ENCODE measurements at regions of chr12 and their contacts with region 1.

Region 1: GRCh38 chr12:123043536-123044001 is 63.1 kb downstream of the ARL6IP4 start:
- DNase-seq: peak; percentile 78 to 92 (median 84)
- H3K4me3 ChIP-seq: no peak overlapping the region
- H3K27ac ChIP-seq: peak overlapping the region; percentile 20 to 36
- H3K4me1 ChIP-seq: peaks cover 0 to 12% (median 5%) of the 10 kb centered on the region in 3 donors
- H3K27me3 ChIP-seq: no peaks in the 10 kb centered on the region
- CTCF ChIP-seq: peak; percentile 79

Region 2: DNA sequence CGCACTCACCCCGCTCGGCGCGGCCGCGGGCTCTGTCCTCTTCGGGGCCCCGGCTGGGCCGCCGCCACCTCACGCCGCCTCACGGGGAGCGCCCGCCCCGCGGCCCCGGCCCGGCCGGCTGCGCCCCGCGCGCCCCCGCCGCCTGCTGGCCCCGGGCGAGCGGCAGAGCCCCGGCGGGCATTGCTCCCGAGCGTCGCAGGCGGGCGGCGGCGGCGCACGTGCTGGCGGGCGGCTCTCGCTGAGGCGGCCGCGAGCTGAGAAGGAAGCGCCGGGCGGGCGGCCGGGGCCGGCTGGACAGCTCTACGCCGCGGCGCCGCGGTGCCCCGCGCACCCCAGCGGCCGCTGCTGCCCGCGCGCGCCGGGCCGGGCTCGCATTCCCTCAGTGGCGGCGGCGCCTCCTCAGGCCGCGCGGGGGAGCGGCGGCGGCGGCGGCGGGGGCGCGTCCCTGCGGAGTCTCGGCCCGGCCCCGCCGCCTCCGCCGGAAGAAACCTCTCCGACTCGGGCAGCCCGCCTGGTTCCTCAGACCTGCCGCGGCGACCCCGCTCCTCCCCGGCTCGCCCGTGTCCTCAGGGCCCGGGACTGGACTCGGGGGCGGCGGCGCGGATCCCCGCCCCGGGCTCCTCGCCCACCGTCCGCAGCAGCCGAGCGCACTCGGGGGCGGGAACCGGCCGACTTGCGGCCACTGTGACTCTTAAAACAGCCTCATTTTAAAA is 107.3 kb after region 1 on chr12 and contains the start of gene PITPNM2:
- intact Hi-C with region 1: loop called (anchors 10 kb)
- DNase-seq: peak; percentile 66 to 90 (median 73)
- H3K4me3 ChIP-seq: peak within 1 kb of the TSS in 2 of 3 donors; percentile 51 to 70
- H3K27ac ChIP-seq: peak within 1 kb of the TSS; percentile 83 to 90
- H3K4me1 ChIP-seq: peaks cover 0 to 14% (median 5%) of the 10 kb centered on the region in 3 donors
- H3K27me3 ChIP-seq: no peaks in the 10 kb centered on the region
- CTCF ChIP-seq: peak; percentile 34
- total RNA-seq, gene PITPNM2: 41.7 TPM

Region 3: DNA sequence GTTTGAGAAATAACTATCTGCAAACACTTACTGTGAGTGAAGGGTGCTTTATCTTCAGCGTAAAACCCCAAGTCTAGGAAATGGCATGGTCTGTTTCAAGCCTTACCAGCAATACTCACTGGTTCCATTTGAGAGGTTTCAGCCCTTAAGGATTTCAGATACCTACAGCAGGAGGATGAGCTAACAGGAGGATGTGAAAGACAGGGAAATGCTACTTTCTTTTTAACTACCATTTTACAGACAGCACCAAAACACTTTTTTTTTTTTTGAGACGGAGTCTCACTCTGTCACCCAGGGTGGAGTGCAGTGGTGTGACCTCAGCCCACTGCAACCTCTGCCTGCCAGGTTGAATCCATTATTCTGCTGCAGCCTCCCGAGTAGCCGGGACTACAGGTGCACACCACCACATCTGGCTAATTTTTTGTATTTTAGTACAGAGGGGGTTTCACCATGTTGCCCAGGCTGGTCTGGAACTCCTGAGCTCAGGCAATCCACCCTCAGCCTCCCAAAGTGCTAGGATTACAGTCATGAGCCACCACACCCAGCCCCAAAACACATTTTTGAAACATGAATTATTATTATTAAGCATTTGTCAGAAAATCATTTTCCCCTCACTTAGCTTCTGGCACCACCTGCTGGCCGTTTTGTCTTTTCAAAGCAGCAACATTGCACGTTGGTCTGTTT is 194.2 kb after region 1 on chr12:
- intact Hi-C with region 1: loop called (anchors 5 kb)
- DNase-seq: peak in 3 of 5 donors; percentile 29 to 72 (median 44)
- H3K4me3 ChIP-seq: no peak overlapping the region
- H3K27ac ChIP-seq: no peak overlapping the region
- H3K4me1 ChIP-seq: peaks cover 0 to 7% (median 4%) of the 10 kb centered on the region in 3 donors
- H3K27me3 ChIP-seq: no peaks in the 10 kb centered on the region
- CTCF ChIP-seq: peak; percentile 82